Common myeloid progenitor, CD34-positive (primary cell): ENCODE measurements at regions of chr17 and their contacts with region 1.

Region 1: GRCh38 chr17:10646392-10646990 is 10.6 kb downstream of the MYH3 start:
- DNase-seq: peak; percentile 67 to 84 (median 74)
- H3K4me3 ChIP-seq: no peak overlapping the region
- H3K27ac ChIP-seq: peak overlapping the region in 1 of 2 experiments; percentile 14
- H3K4me1 ChIP-seq: no peaks in the 10 kb centered on the region
- H3K27me3 ChIP-seq: no peaks in the 10 kb centered on the region

Region 2: GRCh38 chr17:10631048-10631700 is 15.3 kb before region 1 on chr17:
- CTCF ChIA-PET with region 1: interaction called, 99 read pairs
- POLR2A ChIA-PET with region 1: no interaction called
- DNase-seq: peak in 1 of 3 donors; percentile 16
- H3K4me3 ChIP-seq: no peak overlapping the region
- H3K27ac ChIP-seq: no peak overlapping the region
- H3K4me1 ChIP-seq: no peaks in the 10 kb centered on the region
- H3K27me3 ChIP-seq: no peaks in the 10 kb centered on the region

Region 3: DNA sequence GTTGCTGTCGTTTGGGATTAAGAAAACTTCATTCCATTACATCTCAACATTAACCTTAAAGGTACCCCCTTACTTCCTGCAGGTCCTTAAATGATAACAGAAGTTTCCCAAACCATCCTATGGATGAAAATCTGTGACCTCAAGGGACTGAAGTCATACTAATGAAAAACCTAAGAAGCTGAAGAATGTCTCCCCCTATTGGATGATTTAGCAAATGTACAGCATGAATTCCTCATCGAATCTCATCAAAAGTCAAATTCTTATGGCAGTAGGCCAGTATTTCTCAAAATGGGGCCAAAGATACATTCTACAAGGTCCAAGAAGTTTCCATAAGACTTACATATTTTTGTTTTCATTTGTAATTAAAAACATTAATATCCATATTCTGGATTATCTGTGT is 37.4 kb after region 1 on chr17:
- CTCF ChIA-PET with region 1: interaction called, 69 read pairs
- POLR2A ChIA-PET with region 1: interaction called, 3 read pairs
- DNase-seq: peak; percentile 57 to 70 (median 67)
- H3K4me3 ChIP-seq: no peak overlapping the region
- H3K27ac ChIP-seq: no peak overlapping the region
- H3K4me1 ChIP-seq: no peaks in the 10 kb centered on the region
- H3K27me3 ChIP-seq: no peaks in the 10 kb centered on the region

Region 4: DNA sequence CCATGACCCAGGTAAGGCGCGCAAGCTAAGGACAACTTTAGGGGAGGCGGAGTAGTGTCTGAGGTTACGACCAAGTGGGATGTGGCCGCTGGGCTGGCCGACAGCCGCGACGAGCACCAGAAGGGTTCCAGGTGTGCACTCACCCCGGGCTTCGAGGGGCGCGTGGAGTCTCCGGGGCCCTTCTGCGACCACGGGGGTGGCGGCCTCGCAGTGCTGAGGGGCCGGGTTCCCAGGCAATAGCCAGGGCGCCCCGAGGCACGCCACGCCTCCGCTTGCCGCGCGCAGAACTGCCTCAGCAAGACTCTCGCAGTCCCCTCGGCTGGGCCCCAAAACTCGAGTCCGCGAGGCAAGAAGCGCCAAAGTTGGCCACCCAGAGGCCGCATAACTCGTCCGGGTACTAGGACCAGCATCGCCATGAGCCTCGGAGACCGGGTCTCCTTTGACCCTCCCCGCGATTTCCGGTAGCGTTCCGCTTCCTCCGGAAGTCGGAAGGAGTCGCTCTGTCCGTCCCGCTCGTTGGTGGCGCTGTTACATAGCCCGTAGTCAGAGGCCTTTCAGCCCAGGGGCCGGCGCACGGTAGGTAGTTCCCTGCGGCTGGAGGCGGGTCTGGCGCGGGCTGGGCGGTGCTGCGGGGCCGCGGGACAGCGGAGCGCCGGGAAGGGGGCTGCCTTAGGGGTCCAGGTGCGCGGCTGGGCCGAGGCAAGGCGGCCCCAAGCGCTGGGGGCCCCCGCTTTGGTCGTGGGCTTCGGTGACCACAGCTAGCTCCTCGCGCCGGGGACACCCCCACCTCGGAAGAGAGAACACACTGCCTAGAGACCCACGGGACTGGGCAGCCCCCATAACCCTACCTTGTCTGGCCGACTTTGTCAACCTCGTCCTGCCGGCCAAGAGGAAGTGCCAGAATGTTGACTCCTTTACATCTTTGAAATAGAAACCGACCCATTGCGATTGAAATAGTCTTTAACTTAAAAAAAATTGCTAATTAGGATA is 50.9 kb after region 1 on chr17 and contains the starts of genes ADPRM and SCO1:
- CTCF ChIA-PET with region 1: interaction called, 10 read pairs
- POLR2A ChIA-PET with region 1: no interaction called
- DNase-seq: peak; percentile 92 to 95 (median 94)
- H3K4me3 ChIP-seq: peak within 1 kb of the TSS; percentile 86 to 100 (median 93)
- H3K27ac ChIP-seq: peak within 1 kb of the TSS; percentile 91 to 95
- H3K4me1 ChIP-seq: peaks cover 20 to 51% (median 43%) of the 10 kb centered on the region in 4 experiments
- H3K27me3 ChIP-seq: no peaks in the 10 kb centered on the region

Region 5: DNA sequence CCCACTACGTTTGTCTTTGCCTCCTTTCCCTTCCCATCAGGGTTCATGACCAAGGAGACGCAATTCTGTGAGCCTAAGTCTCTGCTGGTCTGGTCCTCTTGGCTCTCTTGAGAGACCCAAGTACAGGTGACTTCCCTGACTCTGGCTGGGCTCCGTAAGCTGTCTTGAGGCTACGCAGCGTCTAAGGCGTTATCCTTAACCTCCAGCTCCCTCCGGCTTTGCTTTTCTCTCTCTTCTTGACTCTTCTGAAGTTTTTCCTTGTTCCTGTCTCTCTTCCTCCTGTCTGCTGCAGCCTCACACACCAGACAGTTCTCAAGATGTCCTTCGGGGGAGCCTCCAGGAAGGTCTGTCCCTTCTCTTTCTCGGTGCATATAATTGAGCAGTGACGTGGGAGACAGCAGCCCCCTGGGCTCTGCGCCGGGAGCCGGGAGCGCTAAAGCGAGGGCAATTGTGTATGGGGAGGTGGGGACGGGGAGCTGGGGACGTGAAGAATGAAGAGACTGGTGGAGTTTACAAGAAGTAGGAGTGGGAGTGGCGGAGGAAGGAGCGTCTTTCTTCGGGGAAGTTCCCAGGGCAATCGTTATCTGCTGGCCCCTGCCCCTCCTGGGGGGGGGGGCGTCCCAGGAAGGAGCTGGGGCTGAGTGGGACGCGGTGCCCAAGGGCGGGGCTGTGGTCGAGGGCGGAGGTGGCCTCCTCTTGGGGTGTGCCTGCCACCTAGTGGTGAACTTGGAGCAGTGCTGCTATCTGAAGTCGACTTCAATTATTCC is 198.3 kb after region 1 on chr17:
- CTCF ChIA-PET with region 1: interaction called, 11 read pairs
- POLR2A ChIA-PET with region 1: no interaction called
- DNase-seq: peak; percentile 74 to 80 (median 79)
- H3K4me3 ChIP-seq: peak overlapping the region; percentile 33 to 84 (median 63)
- H3K27ac ChIP-seq: no peak overlapping the region
- H3K4me1 ChIP-seq: peaks cover 0 to 7% (median 3%) of the 10 kb centered on the region in 4 experiments
- H3K27me3 ChIP-seq: peaks cover 0 to 1% (median 0%) of the 10 kb centered on the region in 5 experiments